ENCODE measurements at regions of chr17 and their contacts with region 1.

Region 1: DNA sequence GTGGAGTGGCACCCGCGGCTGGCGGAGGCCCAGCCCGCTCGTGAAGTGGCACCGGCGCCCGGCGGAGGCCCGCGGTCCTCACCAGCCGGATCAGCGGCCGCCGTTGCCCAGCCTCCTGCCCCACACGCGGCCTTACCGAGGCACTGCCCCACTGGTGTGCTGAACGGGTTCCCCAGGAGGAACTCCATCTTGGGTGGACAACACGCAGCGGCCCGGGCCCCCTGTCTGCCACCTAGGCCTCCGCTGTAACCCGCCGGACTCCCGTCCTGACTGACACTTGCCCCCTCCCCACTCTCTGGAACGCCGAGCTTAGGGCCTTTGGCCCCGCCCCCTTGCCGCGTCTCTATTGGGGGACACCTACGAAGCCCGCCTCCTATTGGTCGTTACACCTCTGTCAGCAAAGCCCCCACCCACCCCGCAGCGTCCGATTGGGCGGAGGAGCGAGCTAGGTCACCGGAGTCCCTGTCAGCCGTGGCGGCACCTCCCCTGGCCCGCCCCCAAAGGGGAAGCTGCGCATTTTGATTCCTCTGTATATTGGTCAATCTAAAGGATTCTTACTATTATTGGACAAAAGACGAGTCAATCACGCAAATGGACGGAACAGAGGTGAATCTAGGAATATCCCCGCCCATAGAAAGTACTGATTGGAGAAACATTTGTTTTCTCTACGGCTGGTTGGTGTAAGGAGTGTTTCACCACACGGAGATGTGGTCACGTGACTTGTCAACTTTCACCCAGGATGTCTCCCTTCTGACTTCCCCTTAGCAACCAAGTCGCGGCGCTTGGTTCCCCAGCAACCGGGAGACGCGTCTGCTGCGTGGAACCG is at the starts of genes DRC3 and TOM1L2:
- DNase-seq: peak; percentile 97
- ATAC-seq: peak; percentile 91
- H3K4me3 Mint-ChIP-seq: peak within 1 kb of the TSS; percentile 94
- H3K27ac Mint-ChIP-seq: peak within 1 kb of the TSS; percentile 87
- H3K4me1 Mint-ChIP-seq: peaks cover 22% of the 10 kb centered on the region
- H3K27me3 Mint-ChIP-seq: no peaks in the 10 kb centered on the region
- CTCF ChIP-seq: no peak
- total RNA-seq, gene DRC3: not detected in 2 replicates
- total RNA-seq, gene TOM1L2: 15.2 and 18.3 TPM in 2 replicates

Region 2: DNA sequence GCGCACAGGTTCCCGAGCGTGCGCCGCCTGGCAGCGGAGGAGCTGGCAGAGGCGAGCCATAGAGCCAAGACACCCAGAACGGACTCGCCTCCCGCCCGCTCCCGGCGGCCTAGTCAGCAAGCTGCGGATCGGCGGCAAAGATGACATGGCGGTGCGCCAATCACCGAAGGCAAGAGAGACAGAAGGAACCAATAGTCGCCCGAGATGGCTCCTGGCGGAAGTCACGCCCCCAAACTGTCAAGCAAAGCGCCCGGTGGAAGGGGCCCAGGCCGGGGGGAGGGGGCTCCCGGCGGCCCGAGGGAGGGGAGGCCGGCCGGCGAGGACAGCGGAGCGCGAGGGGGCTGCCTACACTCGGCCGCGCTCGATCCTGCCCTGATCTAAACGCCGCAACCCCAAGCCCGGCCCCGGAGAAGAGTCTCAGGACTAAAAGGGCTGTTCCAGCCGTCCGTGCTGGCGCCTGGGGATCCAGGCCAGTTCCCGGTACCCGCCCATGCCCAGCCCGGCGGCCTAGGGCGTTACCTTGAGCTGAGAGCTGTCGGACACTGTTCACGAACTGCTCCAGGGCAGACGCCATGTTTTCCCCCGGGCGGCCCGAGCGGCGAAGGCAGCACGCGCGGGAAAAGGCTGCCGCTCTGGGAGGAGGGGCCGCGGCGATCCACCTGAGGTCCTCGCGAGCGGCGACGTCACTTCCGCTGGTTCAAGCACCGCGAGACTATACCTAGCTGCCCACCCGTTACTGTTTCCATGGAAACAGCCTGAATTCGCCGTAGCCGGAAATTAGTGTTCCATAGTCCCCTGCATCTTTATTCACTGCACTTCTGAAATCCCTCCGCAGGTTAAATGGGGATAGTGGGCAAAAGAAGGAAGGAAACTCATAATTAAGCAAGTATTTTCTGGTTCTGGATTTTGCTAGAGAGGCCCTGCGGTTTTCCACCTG is 691.5 kb before region 1 on chr17 and contains the start of gene COPS3:
- CTCF ChIA-PET with region 1: no interaction called
- POLR2A ChIA-PET with region 1: no interaction called
- intact Hi-C with region 1: loop called (anchors 5 kb)
- DNase-seq: peak; percentile 95
- ATAC-seq: peak; percentile 87
- H3K4me3 Mint-ChIP-seq: peak within 1 kb of the TSS; percentile 80
- H3K27ac Mint-ChIP-seq: peak within 1 kb of the TSS; percentile 89
- H3K4me1 Mint-ChIP-seq: peaks cover 42% of the 10 kb centered on the region
- H3K27me3 Mint-ChIP-seq: no peaks in the 10 kb centered on the region
- CTCF ChIP-seq: no peak
- total RNA-seq, gene COPS3: 71.6 and 73.7 TPM in 2 replicates

Region 3: DNA sequence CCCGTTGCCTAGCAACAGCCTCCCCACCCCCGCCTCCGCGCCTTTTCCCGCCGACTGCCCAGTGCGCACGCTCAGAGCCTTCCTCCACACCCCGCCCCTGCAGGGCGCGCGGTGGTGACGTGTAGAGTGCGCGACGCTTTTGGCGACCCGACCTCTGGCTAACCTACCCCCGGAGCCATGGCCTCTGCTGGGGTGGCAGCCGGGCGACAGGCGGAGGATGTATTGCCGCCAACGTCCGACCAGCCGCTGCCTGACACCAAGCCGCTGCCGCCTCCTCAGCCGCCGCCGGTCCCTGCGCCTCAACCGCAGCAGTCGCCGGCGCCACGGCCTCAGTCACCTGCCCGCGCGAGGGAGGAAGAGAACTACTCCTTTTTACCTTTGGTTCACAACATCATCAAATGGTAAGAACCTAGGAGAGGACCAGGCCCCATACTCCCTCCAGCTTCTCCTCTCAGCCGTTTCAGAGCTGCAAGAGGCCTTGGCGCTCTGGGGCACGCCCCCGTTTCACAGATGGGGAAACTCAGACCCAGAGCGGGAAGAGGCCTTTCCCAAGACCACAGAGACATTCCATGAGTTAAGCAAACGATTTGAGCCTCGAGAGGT is 495.4 kb before region 1 on chr17 and contains the start of gene MED9:
- CTCF ChIA-PET with region 1: no interaction called
- POLR2A ChIA-PET with region 1: no interaction called
- intact Hi-C with region 1: loop called (anchors 2 kb)
- DNase-seq: peak; percentile 93
- ATAC-seq: peak; percentile 100
- H3K4me3 Mint-ChIP-seq: peak within 1 kb of the TSS; percentile 90
- H3K27ac Mint-ChIP-seq: peak within 1 kb of the TSS; percentile 84
- H3K4me1 Mint-ChIP-seq: peaks cover 30% of the 10 kb centered on the region
- H3K27me3 Mint-ChIP-seq: no peaks in the 10 kb centered on the region
- CTCF ChIP-seq: no peak
- total RNA-seq, gene MED9: 16.2 and 20.1 TPM in 2 replicates

Region 4: GRCh38 chr17:17496189-17497064 is 475.9 kb before region 1 on chr17 and contains the start of gene RASD1:
- CTCF ChIA-PET with region 1: no interaction called
- POLR2A ChIA-PET with region 1: no interaction called
- intact Hi-C with region 1: no loop called
- DNase-seq: peak; percentile 81
- ATAC-seq: peak; percentile 88
- H3K4me3 Mint-ChIP-seq: peak within 1 kb of the TSS; percentile 80
- H3K27ac Mint-ChIP-seq: no peak within 1 kb of the TSS
- H3K4me1 Mint-ChIP-seq: peaks cover 17% of the 10 kb centered on the region
- H3K27me3 Mint-ChIP-seq: peaks cover 8% of the 10 kb centered on the region
- CTCF ChIP-seq: peak; percentile 67
- total RNA-seq, gene RASD1: 0.86 and 1.0 TPM in 2 replicates

Region 5: GRCh38 chr17:17663160-17664063 is 308.9 kb before region 1 on chr17:
- CTCF ChIA-PET with region 1: no interaction called
- POLR2A ChIA-PET with region 1: no interaction called
- intact Hi-C with region 1: loop called (anchors 5 kb)
- DNase-seq: peak; percentile 61
- ATAC-seq: peak; percentile 93
- H3K4me3 Mint-ChIP-seq: peak overlapping the region; percentile 60
- H3K27ac Mint-ChIP-seq: peak overlapping the region; percentile 57
- H3K4me1 Mint-ChIP-seq: peaks cover 31% of the 10 kb centered on the region
- H3K27me3 Mint-ChIP-seq: peaks cover 2% of the 10 kb centered on the region
- CTCF ChIP-seq: no peak

Region 6: DNA sequence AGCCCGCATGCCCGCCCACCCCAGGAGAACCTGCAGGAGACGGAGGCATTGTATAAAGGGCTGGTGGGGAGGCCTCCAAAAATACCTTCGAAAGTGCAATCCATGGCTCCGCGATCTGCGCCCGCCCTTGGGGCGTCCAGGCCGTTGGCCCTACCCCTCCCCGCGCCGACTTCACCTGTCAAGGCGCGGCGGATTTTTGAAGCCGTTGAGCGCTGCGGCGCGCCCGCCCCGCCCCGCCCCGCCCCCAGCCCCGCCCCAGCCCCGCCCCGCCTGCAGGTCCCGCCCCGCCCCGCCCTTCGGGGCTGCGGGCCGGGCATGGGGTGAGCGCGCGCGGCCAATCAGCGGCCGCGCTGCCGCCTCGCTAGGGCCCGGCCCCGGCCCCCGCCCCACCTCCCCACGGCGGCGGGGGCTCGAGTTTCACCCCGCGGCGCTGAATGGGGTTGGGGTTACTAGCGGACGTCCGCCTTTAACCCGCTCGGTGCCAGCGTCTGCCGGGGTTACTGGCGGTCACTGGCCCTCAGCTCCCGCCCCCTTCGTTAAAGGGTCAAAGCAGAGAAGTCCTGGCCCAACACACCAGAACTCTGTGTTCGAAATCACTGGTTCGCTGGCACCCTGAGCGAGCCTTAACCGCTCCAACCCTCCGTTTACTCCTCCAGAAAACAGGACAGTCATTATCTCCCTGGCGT is 148.8 kb before region 1 on chr17:
- CTCF ChIA-PET with region 1: no interaction called
- POLR2A ChIA-PET with region 1: no interaction called
- intact Hi-C with region 1: loop called (anchors 5 kb)
- DNase-seq: peak; percentile 71
- ATAC-seq: peak; percentile 88
- H3K4me3 Mint-ChIP-seq: peak overlapping the region; percentile 78
- H3K27ac Mint-ChIP-seq: peak overlapping the region; percentile 30
- H3K4me1 Mint-ChIP-seq: peaks cover 62% of the 10 kb centered on the region
- H3K27me3 Mint-ChIP-seq: no peaks in the 10 kb centered on the region
- CTCF ChIP-seq: no peak

Region 7: GRCh38 chr17:17951524-17951923 is 20.8 kb before region 1 on chr17:
- CTCF ChIA-PET with region 1: no interaction called
- POLR2A ChIA-PET with region 1: no interaction called
- intact Hi-C with region 1: no loop called
- DNase-seq: no peak
- ATAC-seq: no peak
- H3K4me3 Mint-ChIP-seq: no peak overlapping the region
- H3K27ac Mint-ChIP-seq: no peak overlapping the region
- H3K4me1 Mint-ChIP-seq: peaks cover 2% of the 10 kb centered on the region
- H3K27me3 Mint-ChIP-seq: no peaks in the 10 kb centered on the region
- CTCF ChIP-seq: no peak

Region 8: GRCh38 chr17:18033442-18034099 is 61.2 kb after region 1 on chr17:
- CTCF ChIA-PET with region 1: no interaction called
- POLR2A ChIA-PET with region 1: interaction called, 7 read pairs
- intact Hi-C with region 1: loop called (anchors 1 kb)
- DNase-seq: no peak
- ATAC-seq: peak; percentile 79
- H3K4me3 Mint-ChIP-seq: no peak overlapping the region
- H3K27ac Mint-ChIP-seq: peak overlapping the region; percentile 61
- H3K4me1 Mint-ChIP-seq: peaks cover 50% of the 10 kb centered on the region
- H3K27me3 Mint-ChIP-seq: no peaks in the 10 kb centered on the region
- CTCF ChIP-seq: peak; percentile 54

Region 9: DNA sequence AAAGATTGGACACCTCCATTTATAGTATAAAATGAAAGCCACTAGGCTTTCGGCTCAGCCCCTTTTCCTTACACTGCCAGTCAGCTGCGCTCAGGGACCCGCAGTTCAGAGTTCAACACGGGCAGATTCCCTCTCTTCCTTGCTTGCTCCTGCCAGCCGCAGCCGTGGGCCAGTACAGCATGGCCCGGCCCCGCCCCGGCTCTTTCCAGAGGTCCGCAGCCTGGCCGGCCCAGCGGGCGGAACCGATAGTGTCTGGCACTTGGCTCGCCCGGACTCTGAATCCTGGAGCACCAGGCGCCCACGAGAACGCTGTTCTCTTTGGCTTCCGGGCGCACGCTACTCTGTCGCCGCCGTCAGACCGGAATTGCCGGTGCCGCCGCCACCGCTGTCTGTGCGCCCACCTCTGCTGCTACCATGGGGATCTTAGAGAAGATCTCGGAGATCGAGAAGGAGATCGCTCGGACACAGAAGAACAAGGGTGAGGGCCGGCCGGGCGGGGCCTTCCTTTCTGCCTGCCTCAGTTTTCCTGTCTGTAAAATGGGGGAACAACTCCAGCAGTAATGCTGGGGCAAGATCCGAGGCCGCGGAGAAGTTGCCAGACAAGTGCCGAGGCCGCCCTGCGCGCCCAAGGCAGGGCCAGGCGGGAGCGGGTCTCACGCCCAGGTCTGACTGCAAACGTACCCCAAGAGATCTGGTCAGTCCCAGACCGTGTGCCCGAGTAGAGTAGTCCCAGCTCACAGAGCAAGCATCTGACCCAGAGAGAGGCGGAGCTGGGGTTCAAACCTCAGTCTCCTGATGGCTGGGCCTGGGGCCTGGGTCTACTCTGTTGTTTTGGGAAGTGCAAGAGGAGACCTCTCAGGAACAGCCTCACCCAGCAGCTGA is 115.5 kb after region 1 on chr17 and contains the start of gene DRG2:
- CTCF ChIA-PET with region 1: no interaction called
- POLR2A ChIA-PET with region 1: no interaction called
- intact Hi-C with region 1: loop called (anchors 1 kb)
- DNase-seq: peak; percentile 93
- ATAC-seq: peak; percentile 95
- H3K4me3 Mint-ChIP-seq: peak within 1 kb of the TSS; percentile 99
- H3K27ac Mint-ChIP-seq: peak within 1 kb of the TSS; percentile 95
- H3K4me1 Mint-ChIP-seq: peaks cover 26% of the 10 kb centered on the region
- H3K27me3 Mint-ChIP-seq: no peaks in the 10 kb centered on the region
- CTCF ChIP-seq: no peak
- total RNA-seq, gene DRG2: 55.7 and 67.1 TPM in 2 replicates

Measured in activated B cell treated with CpG ODN at 0.5 μM for 24 hours (primary cell).